Activated B cell treated with CpG ODN at 0.5 μM for 24 hours (primary cell): ENCODE measurements at regions of chr11 and their contacts with region 1.

Region 1: GRCh38 chr11:64846998-64847666 is 2.7 kb upstream of the CDC42BPG start:
- DNase-seq: peak; percentile 90
- ATAC-seq: peak; percentile 21
- H3K4me3 Mint-ChIP-seq: no peak overlapping the region
- H3K27ac Mint-ChIP-seq: peak overlapping the region; percentile 61
- H3K4me1 Mint-ChIP-seq: peaks cover 64% of the 10 kb centered on the region
- H3K27me3 Mint-ChIP-seq: no peaks in the 10 kb centered on the region
- CTCF ChIP-seq: peak; percentile 46

Region 2: GRCh38 chr11:64448599-64449556 is 398.3 kb before region 1 on chr11:
- CTCF ChIA-PET with region 1: no interaction called
- POLR2A ChIA-PET with region 1: no interaction called
- intact Hi-C with region 1: loop called (anchors 2 kb)
- DNase-seq: peak; percentile 71
- ATAC-seq: peak; percentile 59
- H3K4me3 Mint-ChIP-seq: peak overlapping the region; percentile 87
- H3K27ac Mint-ChIP-seq: peak overlapping the region; percentile 73
- H3K4me1 Mint-ChIP-seq: peaks cover 35% of the 10 kb centered on the region
- H3K27me3 Mint-ChIP-seq: peaks cover 2% of the 10 kb centered on the region
- CTCF ChIP-seq: no peak

Region 3: DNA sequence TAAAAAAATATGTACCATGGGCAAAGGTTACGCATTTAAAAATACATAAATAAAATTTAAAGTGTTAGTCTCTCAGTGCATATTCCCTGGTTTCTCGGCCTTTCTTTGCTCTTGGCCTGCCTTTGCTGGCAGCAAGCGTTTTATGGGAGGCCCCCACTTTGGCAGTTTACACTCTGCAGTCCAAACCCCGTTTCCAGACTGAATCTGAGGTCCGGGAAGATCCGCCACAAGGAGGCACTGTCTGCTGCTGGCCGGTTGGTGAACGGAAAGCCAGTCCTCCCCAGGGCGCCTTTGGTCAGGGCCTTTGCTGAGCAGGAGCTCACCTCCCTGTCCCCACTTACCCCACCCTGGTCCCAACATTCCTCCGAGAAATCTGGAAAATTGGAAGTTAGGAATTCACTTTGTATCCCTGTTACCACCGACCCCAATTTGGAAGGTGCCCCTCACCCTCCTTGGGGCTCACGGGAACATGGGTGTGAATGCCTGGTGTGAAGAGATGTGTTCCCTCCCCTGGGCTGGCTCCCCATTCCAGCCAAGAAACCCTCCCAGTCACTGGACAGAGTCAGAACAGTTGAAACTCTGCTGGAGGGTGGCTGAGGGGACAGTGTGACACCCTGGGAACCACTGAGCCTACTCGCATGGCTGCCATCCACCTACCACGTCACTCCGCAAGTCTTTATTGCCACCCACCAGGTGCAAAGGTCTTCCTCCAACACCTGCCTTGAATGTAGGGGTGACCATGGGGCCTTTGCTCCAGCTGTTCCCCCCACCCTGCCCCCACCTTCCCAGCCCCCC is 59.4 kb before region 1 on chr11:
- CTCF ChIA-PET with region 1: interaction called, 8 read pairs
- POLR2A ChIA-PET with region 1: interaction called, 8 read pairs
- intact Hi-C with region 1: loop called (anchors 1 kb)
- DNase-seq: peak; percentile 57
- ATAC-seq: peak; percentile 74
- H3K4me3 Mint-ChIP-seq: no peak overlapping the region
- H3K27ac Mint-ChIP-seq: peak overlapping the region; percentile 73
- H3K4me1 Mint-ChIP-seq: peaks cover 18% of the 10 kb centered on the region
- H3K27me3 Mint-ChIP-seq: no peaks in the 10 kb centered on the region
- CTCF ChIP-seq: no peak

Region 4: DNA sequence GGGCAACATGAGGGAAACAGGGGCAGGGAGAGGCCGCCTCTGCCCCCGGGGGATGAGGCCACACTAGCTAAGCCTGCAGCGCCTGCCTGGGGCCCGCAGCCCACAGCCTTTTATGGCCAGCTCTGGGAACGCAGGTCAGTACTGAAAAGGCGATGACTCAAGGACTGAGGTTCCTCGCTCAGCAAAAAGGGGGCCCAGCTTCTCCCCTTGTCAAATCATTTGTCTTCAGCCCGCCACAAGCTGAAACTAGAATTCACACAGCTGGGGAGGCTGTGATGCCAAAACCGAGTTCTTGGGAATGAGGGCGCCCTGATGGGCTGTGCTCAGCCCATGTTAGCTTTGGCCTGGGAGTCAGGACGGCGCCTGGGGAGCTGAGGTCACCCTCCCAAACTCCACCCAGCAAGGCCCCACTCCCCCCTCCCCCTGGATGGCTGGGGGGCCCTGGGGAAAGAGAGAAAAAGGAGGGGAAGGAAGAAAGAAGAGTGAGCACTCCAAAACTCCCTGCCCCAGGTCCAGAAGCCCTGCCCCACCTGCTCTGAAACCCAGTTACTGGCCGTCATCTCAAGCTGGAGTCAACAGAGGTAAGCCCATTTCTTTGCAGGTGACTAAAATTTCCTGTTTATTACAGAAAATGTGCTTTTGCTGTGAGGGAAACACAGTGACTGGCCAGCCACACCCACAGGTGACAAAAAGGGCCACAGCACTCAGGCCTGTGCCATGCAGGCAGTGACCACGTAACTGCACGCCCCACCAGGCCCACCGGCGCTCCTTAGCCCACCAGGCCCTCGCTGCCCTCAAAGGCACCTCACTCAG is 17.5 kb after region 1 on chr11:
- CTCF ChIA-PET with region 1: interaction called, 213 read pairs
- POLR2A ChIA-PET with region 1: interaction called, 655 read pairs
- intact Hi-C with region 1: loop called (anchors 1 kb)
- DNase-seq: no peak
- ATAC-seq: no peak
- H3K4me3 Mint-ChIP-seq: peak overlapping the region; percentile 73
- H3K27ac Mint-ChIP-seq: peak overlapping the region; percentile 92
- H3K4me1 Mint-ChIP-seq: peaks cover 96% of the 10 kb centered on the region
- H3K27me3 Mint-ChIP-seq: no peaks in the 10 kb centered on the region
- CTCF ChIP-seq: no peak

Region 5: GRCh38 chr11:64894070-64894796 is 47.1 kb after region 1 on chr11:
- CTCF ChIA-PET with region 1: interaction called, 310 read pairs
- POLR2A ChIA-PET with region 1: interaction called, 1,194 read pairs
- intact Hi-C with region 1: loop called (anchors 1 kb)
- DNase-seq: peak; percentile 93
- ATAC-seq: peak; percentile 99
- H3K4me3 Mint-ChIP-seq: no peak overlapping the region
- H3K27ac Mint-ChIP-seq: no peak overlapping the region
- H3K4me1 Mint-ChIP-seq: peaks cover 26% of the 10 kb centered on the region
- H3K27me3 Mint-ChIP-seq: no peaks in the 10 kb centered on the region
- CTCF ChIP-seq: peak; percentile 67

Region 6: GRCh38 chr11:65078151-65078550 is 231.0 kb after region 1 on chr11:
- CTCF ChIA-PET with region 1: interaction called, 6 read pairs
- POLR2A ChIA-PET with region 1: no interaction called
- intact Hi-C with region 1: loop called (anchors 1 kb)
- DNase-seq: peak; percentile 51
- ATAC-seq: peak; percentile 99
- H3K4me3 Mint-ChIP-seq: no peak overlapping the region
- H3K27ac Mint-ChIP-seq: peak overlapping the region; percentile 41
- H3K4me1 Mint-ChIP-seq: peaks cover 10% of the 10 kb centered on the region
- H3K27me3 Mint-ChIP-seq: no peaks in the 10 kb centered on the region
- CTCF ChIP-seq: no peak

Region 7: DNA sequence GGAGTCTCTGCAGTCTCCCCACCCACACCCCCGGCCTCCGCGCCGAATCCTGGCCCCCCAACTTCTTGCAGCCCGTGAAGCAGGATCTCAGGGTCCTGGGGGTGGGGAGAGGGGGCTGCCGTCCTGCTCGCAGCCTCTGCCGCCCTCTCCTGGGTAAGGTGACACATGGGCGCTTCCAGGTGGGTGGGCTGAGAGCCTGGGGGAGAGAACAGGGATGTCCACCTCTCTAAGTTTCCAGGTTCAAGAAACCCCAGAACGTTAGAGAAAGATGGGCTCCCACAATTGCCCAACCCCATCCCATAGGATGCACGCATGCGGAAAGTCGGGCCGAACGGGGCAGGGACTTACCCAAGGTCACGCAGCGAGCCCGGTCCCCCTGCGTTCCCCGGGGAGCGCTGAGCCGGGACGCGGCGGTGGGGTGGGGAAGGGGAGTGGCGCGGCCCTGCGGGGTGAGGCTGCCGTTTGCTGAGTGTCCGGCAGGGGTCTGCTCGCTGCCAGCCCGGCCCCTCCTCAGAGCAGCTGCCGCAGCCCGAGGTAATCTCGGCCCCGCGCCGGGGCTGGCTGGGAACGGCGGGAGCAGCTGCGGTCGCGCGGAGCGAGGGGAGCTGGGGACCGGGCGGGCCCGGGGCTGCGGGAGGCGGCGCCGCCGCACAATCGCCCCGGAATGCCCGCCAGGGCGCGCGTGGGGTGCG is 333.9 kb after region 1 on chr11:
- CTCF ChIA-PET with region 1: interaction called, 3 read pairs
- POLR2A ChIA-PET with region 1: no interaction called
- intact Hi-C with region 1: loop called (anchors 10 kb)
- DNase-seq: peak; percentile 77
- ATAC-seq: peak; percentile 82
- H3K4me3 Mint-ChIP-seq: peak overlapping the region; percentile 92
- H3K27ac Mint-ChIP-seq: peak overlapping the region; percentile 92
- H3K4me1 Mint-ChIP-seq: peaks cover 21% of the 10 kb centered on the region
- H3K27me3 Mint-ChIP-seq: no peaks in the 10 kb centered on the region
- CTCF ChIP-seq: no peak